ENCODE measurements at regions of chr14 and their contacts with region 1.

Region 1: GRCh38 chr14:26522967-26523366 is 74.9 kb downstream of the NOVA1 start:
- DNase-seq: no peak
- H3K4me3 ChIP-seq: no peak overlapping the region
- H3K27ac ChIP-seq: peak overlapping the region; percentile 45 to 60 (median 58)
- H3K4me1 ChIP-seq: peaks cover 0 to 47% (median 30%) of the 10 kb centered on the region in 4 donors
- H3K27me3 ChIP-seq: no peaks in the 10 kb centered on the region
- CTCF ChIP-seq: no peak
- EP300 ChIP-seq: no peak
- POLR2A ChIP-seq: no peak

Region 2: DNA sequence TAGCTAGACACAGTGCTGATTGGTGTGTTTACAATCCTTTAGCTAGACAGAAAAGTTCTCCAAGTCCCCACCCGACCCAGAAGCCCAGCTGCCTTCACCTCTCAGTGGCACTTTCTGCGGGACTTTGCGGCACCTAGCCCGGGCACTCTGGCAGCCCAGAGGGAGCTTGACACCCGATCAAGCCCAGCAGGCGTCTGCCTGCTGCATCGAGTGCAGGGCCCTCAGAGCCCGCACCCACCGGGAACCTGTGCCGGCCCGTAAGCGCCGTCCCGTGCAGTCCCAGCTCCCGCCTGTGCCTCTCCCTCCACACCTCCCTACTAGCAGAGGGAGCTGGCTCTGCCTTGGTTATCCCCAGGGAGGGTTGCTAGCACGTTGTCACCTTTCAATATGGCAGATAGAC is 842.0 kb before region 1 on chr14:
- intact Hi-C with region 1: no loop called
- DNase-seq: no peak
- H3K4me3 ChIP-seq: no peak overlapping the region
- H3K27ac ChIP-seq: no peak overlapping the region
- H3K4me1 ChIP-seq: no peaks in the 10 kb centered on the region
- H3K27me3 ChIP-seq: no peaks in the 10 kb centered on the region
- CTCF ChIP-seq: no peak
- EP300 ChIP-seq: no peak
- POLR2A ChIP-seq: no peak

Region 3: GRCh38 chr14:26598081-26598795 is 75.3 kb after region 1 on chr14:
- intact Hi-C with region 1: loop called (anchors 2 kb)
- DNase-seq: peak; percentile 95
- H3K4me3 ChIP-seq: peak overlapping the region; percentile 69 to 86 (median 82)
- H3K27ac ChIP-seq: peak overlapping the region; percentile 90 to 95 (median 92)
- H3K4me1 ChIP-seq: peaks cover 0 to 32% (median 23%) of the 10 kb centered on the region in 4 donors
- H3K27me3 ChIP-seq: no peaks in the 10 kb centered on the region
- CTCF ChIP-seq: no peak
- EP300 ChIP-seq: no peak
- POLR2A ChIP-seq: no peak

Region 4: GRCh38 chr14:26687301-26687837 is 164.4 kb after region 1 on chr14:
- intact Hi-C with region 1: no loop called
- DNase-seq: no peak
- H3K4me3 ChIP-seq: no peak overlapping the region
- H3K27ac ChIP-seq: no peak overlapping the region
- H3K4me1 ChIP-seq: no peaks in the 10 kb centered on the region
- H3K27me3 ChIP-seq: no peaks in the 10 kb centered on the region
- CTCF ChIP-seq: no peak
- EP300 ChIP-seq: no peak
- POLR2A ChIP-seq: no peak